ENCODE measurements at regions of chr2 and their contacts with region 1.

Region 1: DNA sequence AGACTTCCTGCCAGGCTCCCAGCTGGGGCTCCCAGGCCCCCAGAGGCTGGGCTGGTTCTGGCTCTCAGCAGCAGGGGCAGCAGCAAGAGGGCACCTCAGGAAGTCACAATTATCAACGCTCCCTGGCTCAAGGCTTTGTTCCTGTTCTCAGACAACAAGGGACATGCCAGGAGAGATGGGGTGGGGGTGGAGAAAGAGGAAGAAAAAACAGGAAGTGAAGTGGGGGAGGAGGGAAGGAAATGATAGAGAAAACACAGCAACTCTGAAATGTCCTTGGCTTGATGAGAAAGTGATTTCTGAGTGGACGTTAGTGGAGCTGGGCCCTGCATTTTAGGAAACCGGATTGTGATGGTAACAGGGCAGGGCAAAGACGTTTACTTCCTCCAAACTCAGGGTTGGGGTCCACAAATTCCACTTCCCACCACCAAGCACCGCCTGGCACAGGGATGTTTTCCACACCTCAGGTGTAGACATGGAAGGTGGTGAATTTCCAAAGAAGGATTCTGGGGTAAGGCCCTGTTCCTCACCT is 40.4 kb downstream of the CYRIA start:
- DNase-seq: peak in 1 of 2 donors; percentile 55
- ATAC-seq: peak; percentile 33 to 51
- H3K4me3 ChIP-seq: no peak overlapping the region
- H3K27ac ChIP-seq: peak overlapping the region; percentile 44 to 81 (median 65)
- H3K4me1 ChIP-seq: peaks cover 47 to 73% of the 10 kb centered on the region in 2 donors
- H3K27me3 ChIP-seq: no peaks in the 10 kb centered on the region
- CTCF ChIP-seq: no peak
- POLR2A ChIP-seq: no peak

Region 2: GRCh38 chr2:16665748-16666448 is 40.6 kb after region 1 on chr2 and contains the start of gene CYRIA:
- in situ Hi-C with region 1: no loop called
- intact Hi-C with region 1: loop called (anchors 5 kb)
- DNase-seq: peak; percentile 48 to 62
- ATAC-seq: peak; percentile 65 to 68
- H3K4me3 ChIP-seq: peak within 1 kb of the TSS; percentile 70 to 79 (median 73)
- H3K27ac ChIP-seq: peak within 1 kb of the TSS; percentile 70 to 79 (median 76)
- H3K4me1 ChIP-seq: peaks cover 21 to 28% of the 10 kb centered on the region in 2 donors
- H3K27me3 ChIP-seq: no peaks in the 10 kb centered on the region
- CTCF ChIP-seq: no peak
- POLR2A ChIP-seq: peak in 1 of 2 donors; percentile 23
- total RNA-seq, gene CYRIA: 3.3 to 8.0 (median 4.5) TPM

Region 3: DNA sequence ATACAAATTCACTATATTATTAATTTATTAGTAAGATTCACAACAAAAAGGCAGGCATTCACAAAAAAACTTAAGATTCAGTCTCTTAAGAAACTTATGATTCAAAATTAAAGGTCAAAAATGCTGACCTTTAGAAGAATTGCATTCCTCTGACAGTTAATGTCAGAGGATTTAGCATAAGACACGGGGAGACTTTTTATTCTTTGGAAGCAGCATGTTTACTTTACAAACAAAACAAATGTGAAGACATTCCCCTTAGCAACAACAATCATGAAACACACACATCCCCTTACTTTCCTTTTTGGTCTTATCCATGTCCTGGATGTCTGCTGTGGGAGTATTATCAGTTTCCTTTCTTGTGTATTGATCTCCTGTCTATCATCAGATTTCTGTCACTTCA is 775.8 kb after region 1 on chr2:
- in situ Hi-C with region 1: no loop called
- intact Hi-C with region 1: no loop called
- DNase-seq: no peak
- ATAC-seq: no peak
- H3K4me3 ChIP-seq: no peak overlapping the region
- H3K27ac ChIP-seq: no peak overlapping the region
- H3K4me1 ChIP-seq: no peaks in the 10 kb centered on the region
- H3K27me3 ChIP-seq: no peaks in the 10 kb centered on the region
- CTCF ChIP-seq: no peak
- POLR2A ChIP-seq: no peak